ENCODE measurements at regions of chr2 and their contacts with region 1.

Region 1: DNA sequence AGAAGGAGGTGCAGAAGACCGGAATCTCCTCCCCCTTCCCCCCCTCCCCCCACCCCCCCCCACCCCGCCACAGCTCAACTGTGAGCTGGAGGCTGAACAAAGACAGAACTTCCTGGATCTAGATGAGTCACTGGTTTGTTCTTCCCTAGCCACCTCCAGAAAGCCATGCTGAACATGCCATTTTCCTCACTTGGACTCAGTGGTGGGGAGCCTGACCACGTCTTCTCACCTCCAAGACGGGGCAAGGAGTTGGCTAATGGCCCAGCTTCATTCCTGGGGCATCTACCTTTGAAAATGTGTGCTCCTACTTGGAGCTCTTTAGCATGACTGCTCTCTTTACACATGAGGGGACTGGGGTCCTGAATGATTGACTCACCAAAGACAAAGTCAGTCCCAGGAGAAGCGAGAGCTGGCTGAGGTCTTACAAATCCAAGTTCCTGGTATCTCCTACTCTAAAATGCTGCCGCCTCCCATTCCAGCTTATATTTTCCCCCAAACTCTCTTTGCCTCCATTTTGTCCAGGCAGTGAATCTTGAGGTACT is 22.6 kb upstream of the FZD5 start:
- DNase-seq: no peak
- ATAC-seq: no peak
- H3K4me3 ChIP-seq: no peak overlapping the region
- H3K4me3 Mint-ChIP-seq: no peak overlapping the region
- H3K27ac ChIP-seq: no peak overlapping the region
- H3K27ac Mint-ChIP-seq: no peak overlapping the region
- H3K4me1 ChIP-seq: no peaks in the 10 kb centered on the region
- H3K4me1 Mint-ChIP-seq: no peaks in the 10 kb centered on the region
- H3K27me3 ChIP-seq: peaks cover 0 to 14% of the 10 kb centered on the region in 2 experiments
- H3K27me3 Mint-ChIP-seq: peaks cover 8 to 17% of the 10 kb centered on the region in 2 donors

Region 2: GRCh38 chr2:207760453-207760852 is 31.9 kb before region 1 on chr2:
- CTCF ChIA-PET with region 1: no interaction called
- POLR2A ChIA-PET with region 1: no interaction called
- DNase-seq: no peak
- ATAC-seq: no peak
- H3K4me3 ChIP-seq: no peak overlapping the region
- H3K4me3 Mint-ChIP-seq: no peak overlapping the region
- H3K27ac ChIP-seq: no peak overlapping the region
- H3K27ac Mint-ChIP-seq: no peak overlapping the region
- H3K4me1 ChIP-seq: no peaks in the 10 kb centered on the region
- H3K4me1 Mint-ChIP-seq: no peaks in the 10 kb centered on the region
- H3K27me3 ChIP-seq: peaks cover 0 to 2% of the 10 kb centered on the region in 2 experiments
- H3K27me3 Mint-ChIP-seq: peaks cover 21 to 30% of the 10 kb centered on the region in 2 donors

Region 3: GRCh38 chr2:208122248-208122647 is 329.9 kb after region 1 on chr2:
- CTCF ChIA-PET with region 1: interaction called in 1 of 2 experiments, 16 read pairs
- POLR2A ChIA-PET with region 1: no interaction called
- DNase-seq: no peak
- ATAC-seq: no peak
- H3K4me3 ChIP-seq: no peak overlapping the region
- H3K4me3 Mint-ChIP-seq: no peak overlapping the region
- H3K27ac ChIP-seq: no peak overlapping the region
- H3K27ac Mint-ChIP-seq: no peak overlapping the region
- H3K4me1 ChIP-seq: no peaks in the 10 kb centered on the region
- H3K4me1 Mint-ChIP-seq: peaks cover 6 to 15% (median 8%) of the 10 kb centered on the region in 3 donors
- H3K27me3 ChIP-seq: peaks cover 0 to 12% of the 10 kb centered on the region in 2 experiments
- H3K27me3 Mint-ChIP-seq: peaks cover 21 to 28% of the 10 kb centered on the region in 2 donors

Measured in T-cell (primary cell).